OCI-LY7 (cell line): ENCODE measurements at regions of chr4 and their contacts with region 1.

Region 1: GRCh38 chr4:123361195-123361861 is 35.3 kb upstream of the SPRY1 start:
- DNase-seq: no peak
- H3K4me3 ChIP-seq: no peak overlapping the region
- H3K27ac ChIP-seq: no peak overlapping the region
- H3K4me1 ChIP-seq: peaks cover 74% of the 10 kb centered on the region
- CTCF ChIP-seq: no peak

Region 2: GRCh38 chr4:122854447-122855352 is 506.6 kb before region 1 on chr4:
- CTCF ChIA-PET with region 1: no interaction called
- POLR2A ChIA-PET with region 1: no interaction called
- intact Hi-C with region 1: no loop called
- DNase-seq: no peak
- H3K4me3 ChIP-seq: no peak overlapping the region
- H3K27ac ChIP-seq: no peak overlapping the region
- H3K4me1 ChIP-seq: no peaks in the 10 kb centered on the region
- CTCF ChIP-seq: no peak

Region 3: DNA sequence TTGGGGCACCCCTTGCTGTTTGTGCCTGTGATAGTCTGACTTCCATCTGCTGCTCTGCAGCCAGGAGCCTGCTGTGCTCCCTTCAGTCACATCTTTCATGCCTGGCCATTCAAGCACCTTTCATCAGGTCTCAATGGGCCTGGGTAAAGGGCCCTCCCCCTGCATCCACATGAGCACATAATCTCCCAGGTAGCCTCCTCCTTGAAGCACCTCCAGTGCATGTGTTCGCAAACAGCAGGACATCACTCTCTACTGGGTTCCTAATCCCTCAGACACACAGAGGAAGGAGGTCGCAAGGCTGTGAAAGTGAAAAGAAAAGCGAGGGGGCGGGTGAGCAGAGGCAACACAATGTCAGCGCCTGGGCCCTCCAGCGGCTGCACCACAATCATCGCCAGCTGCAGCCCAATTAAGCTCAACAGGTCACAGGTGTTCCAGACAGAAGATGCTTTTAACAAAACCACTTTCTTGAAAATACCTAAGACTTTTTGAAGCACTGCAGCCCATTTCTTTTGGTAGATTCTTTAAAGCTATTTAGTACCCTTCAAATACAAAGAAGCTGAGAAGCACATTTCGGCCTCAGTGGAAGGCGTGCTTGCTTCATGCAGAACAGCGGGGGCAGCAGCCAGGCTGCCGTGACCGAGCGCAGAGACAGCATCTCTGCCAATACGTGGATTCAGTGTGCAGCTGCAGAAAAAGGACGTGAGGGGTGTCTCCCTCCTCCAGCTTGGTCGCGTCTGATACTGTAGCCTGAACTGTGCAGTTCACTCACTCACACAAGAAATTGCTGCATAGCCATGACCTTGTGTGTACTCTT is 57.0 kb before region 1 on chr4:
- CTCF ChIA-PET with region 1: no interaction called
- POLR2A ChIA-PET with region 1: interaction called, 4 read pairs
- intact Hi-C with region 1: loop called (anchors 1 kb)
- DNase-seq: peak; percentile 86
- H3K4me3 ChIP-seq: peak overlapping the region; percentile 47
- H3K27ac ChIP-seq: peak overlapping the region; percentile 65
- H3K4me1 ChIP-seq: peaks cover 40% of the 10 kb centered on the region
- CTCF ChIP-seq: peak; percentile 66

Region 4: DNA sequence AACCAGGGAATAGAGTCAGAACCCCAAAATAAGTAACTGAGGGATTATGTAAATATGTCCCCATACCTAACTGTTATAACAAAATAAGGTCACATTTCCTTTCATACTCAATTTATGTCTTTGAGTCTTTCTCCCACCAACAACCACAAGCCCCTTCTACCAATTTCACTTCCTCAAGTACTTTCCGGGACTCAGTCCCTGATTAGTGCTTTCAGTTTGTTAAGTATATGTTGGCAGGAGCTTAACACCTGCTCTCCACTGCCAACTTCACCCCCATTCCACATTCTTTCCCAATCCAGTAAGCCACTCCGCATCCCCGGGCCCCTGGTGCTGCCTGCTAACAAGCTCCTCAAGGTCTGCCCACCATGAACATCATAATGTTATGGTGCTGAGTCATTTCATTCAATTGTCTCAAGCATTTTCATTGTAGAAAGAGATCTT is 36.1 kb before region 1 on chr4:
- CTCF ChIA-PET with region 1: no interaction called
- POLR2A ChIA-PET with region 1: interaction called, 18 read pairs
- intact Hi-C with region 1: loop called (anchors 1 kb)
- DNase-seq: peak; percentile 88
- H3K4me3 ChIP-seq: peak overlapping the region; percentile 49
- H3K27ac ChIP-seq: peak overlapping the region; percentile 72
- H3K4me1 ChIP-seq: peaks cover 41% of the 10 kb centered on the region
- CTCF ChIP-seq: no peak

Region 5: DNA sequence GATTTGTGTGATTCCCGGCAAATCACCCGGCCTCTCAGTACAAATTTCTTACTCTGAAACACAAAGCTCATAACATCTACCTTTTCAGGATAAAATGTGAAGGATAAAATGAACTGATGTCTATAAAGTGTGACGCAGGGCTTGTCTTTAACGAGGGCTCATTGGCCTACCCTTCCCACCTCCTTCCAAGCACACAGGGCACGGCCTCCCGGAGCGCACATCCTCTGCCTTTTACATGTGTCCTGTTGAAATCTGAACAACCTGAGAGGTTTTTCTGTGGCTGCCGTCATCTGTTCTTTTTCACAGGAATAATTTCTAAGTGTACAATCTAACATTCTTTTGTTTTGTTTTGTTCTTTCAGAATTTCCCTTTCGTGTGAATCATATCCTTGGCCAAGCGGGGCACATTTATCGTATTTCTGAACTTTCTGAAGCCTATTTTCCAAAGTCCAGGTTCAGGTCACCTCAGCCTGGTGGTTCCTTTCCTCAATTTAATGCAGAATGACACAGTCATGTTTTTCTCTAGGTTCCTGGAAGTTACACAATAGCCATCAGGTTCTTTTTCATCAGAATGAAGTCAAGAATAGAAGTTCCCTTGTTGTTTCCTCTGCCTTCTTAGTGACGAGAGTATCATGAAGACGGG is 17.8 kb before region 1 on chr4:
- CTCF ChIA-PET with region 1: interaction called, 12 read pairs
- POLR2A ChIA-PET with region 1: interaction called, 51 read pairs
- intact Hi-C with region 1: no loop called
- DNase-seq: no peak
- H3K4me3 ChIP-seq: no peak overlapping the region
- H3K27ac ChIP-seq: no peak overlapping the region
- H3K4me1 ChIP-seq: peaks cover 13% of the 10 kb centered on the region
- CTCF ChIP-seq: no peak

Region 6: GRCh38 chr4:123350191-123350544 is 11.2 kb before region 1 on chr4:
- CTCF ChIA-PET with region 1: interaction called, 12 read pairs
- POLR2A ChIA-PET with region 1: interaction called, 51 read pairs
- intact Hi-C with region 1: no loop called
- DNase-seq: peak; percentile 82
- H3K4me3 ChIP-seq: no peak overlapping the region
- H3K27ac ChIP-seq: no peak overlapping the region
- H3K4me1 ChIP-seq: peaks cover 41% of the 10 kb centered on the region
- CTCF ChIP-seq: peak; percentile 81

Region 7: DNA sequence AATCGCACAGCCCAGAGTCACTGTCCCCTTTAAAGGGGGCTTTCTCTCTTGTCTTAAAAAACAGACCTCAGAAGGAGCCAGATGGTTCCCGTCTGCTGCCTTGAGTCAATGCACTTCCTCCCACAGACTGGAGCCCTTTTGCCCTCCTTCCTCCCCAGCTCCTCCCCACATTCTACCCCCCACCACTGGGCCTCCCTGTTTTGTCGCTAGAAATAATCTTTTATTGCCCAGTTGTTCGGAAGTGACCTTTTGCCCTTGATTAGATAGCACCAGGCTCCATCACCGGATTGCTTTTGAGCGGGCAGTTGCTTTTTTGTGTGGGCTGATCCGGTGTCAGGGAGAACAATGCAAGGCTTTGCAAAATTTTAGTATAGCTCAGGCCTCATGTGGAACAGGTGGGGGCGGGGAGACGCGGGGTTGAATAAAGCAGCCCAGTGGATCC is 83.0 kb after region 1 on chr4:
- CTCF ChIA-PET with region 1: no interaction called
- POLR2A ChIA-PET with region 1: interaction called, 6 read pairs
- intact Hi-C with region 1: loop called (anchors 5 kb)
- DNase-seq: peak; percentile 91
- H3K4me3 ChIP-seq: peak overlapping the region; percentile 61
- H3K27ac ChIP-seq: peak overlapping the region; percentile 97
- H3K4me1 ChIP-seq: peaks cover 78% of the 10 kb centered on the region
- CTCF ChIP-seq: no peak